Ascending aorta (tissue), 2 donors: ENCODE measurements at regions of chr18 and their contacts with region 1.

Region 1: DNA sequence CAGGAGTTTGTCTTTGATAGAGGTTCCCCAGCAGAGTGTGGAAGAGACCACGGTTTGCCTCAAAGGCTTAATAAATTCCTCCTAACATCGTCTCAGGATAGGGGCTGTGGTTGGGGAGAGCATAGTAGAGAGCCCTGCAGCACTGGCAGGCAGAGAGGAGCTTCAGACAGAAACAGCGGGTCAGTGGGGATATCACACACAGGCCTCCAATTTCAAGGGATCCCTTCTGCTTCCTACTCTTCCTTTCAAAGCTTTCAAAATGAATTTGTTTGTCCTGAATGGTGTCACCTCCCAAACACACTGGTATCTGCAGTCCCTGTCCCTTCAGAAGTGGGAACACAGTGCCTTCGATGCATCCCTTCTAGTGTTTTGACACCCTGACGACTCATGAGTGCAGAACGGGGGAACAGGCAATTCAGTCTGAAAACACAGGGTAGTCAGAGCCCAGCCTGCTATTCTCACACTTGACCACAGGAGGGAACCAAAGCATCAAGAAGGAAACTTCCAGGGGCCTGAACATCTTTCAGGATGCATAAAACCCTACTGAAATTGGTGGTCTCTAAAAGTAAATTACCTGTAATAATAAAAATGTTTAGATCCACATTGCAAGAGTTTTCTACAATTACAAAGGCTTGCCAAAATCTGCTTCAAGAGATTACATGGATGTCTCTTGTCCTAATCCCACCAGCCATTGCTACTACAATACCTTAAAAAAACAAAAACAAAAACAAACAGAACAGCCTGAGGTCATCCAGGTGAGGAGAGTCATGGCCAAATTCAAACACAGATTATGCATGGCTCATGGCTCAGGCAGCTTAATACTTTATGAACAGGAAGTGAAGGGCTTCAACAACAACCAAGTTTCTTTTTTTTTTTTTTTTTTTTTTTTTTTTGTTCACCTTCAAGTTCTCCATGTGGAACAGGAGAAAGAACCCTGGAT is 49.8 kb downstream of the SLC14A2 start:
- DNase-seq: peak in 1 of 2 donors; percentile 88
- H3K4me3 ChIP-seq: no peak overlapping the region
- H3K27ac ChIP-seq: no peak overlapping the region
- H3K4me1 ChIP-seq: peaks cover 8 to 25% of the 10 kb centered on the region in 2 donors
- H3K27me3 ChIP-seq: no peaks in the 10 kb centered on the region
- CTCF ChIP-seq: peak; percentile 90 to 99 (median 93)

Region 2: GRCh38 chr18:45503990-45504389 is 161.1 kb before region 1 on chr18:
- intact Hi-C with region 1: no loop called
- DNase-seq: no peak
- H3K4me3 ChIP-seq: no peak overlapping the region
- H3K27ac ChIP-seq: peak overlapping the region in 1 of 2 donors; percentile 12
- H3K4me1 ChIP-seq: peaks cover 0 to 12% of the 10 kb centered on the region in 2 donors
- H3K27me3 ChIP-seq: no peaks in the 10 kb centered on the region
- CTCF ChIP-seq: no peak

Region 3: DNA sequence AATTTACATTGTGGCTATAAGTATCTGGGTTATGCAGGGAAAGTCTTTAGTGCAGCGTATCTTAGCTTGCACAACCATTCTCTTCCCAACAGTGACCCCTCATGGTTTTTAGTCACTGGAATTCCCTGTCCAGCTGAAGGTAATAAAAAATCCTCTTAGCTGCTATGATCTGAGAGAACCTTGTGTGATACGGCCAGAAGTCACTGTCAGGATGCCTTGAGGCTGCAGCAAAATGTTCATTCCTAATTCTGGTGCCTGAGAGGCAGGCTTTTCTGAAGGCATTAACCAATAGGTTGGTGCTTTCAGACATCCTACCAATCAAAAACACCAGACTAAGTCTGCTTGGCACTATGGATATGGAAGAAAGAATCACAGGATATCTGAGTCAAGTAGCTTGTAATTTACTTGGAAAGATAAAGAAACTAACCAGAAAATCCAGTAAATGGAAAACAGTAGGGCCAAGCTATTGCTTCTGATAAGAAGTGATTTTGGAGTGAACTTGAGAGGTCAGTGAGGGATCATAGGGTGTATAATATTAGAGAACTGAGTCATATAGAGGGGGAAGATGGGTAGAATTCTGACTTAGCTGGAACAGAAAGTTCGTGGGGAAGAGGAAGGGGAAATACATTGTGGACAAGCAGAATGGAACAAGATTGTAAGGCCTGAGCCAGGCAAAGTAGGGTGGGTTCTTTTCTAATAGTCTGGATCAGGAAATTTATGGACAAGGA is 138.8 kb before region 1 on chr18:
- intact Hi-C with region 1: loop called (anchors 5 kb)
- DNase-seq: no peak
- H3K4me3 ChIP-seq: no peak overlapping the region
- H3K27ac ChIP-seq: peak overlapping the region; percentile 16 to 53
- H3K4me1 ChIP-seq: peaks cover 10 to 28% of the 10 kb centered on the region in 2 donors
- H3K27me3 ChIP-seq: no peaks in the 10 kb centered on the region
- CTCF ChIP-seq: peak in 1 of 3 experiments; percentile 36

Region 4: GRCh38 chr18:45755934-45756333 is 90.8 kb after region 1 on chr18:
- intact Hi-C with region 1: loop called (anchors 5 kb)
- DNase-seq: peak; percentile 44 to 94
- H3K4me3 ChIP-seq: no peak overlapping the region
- H3K27ac ChIP-seq: peak overlapping the region; percentile 71 to 73
- H3K4me1 ChIP-seq: peaks cover 13 to 27% of the 10 kb centered on the region in 2 donors
- H3K27me3 ChIP-seq: no peaks in the 10 kb centered on the region
- CTCF ChIP-seq: no peak

Region 5: GRCh38 chr18:45850021-45850420 is 184.9 kb after region 1 on chr18:
- intact Hi-C with region 1: loop called (anchors 5 kb)
- DNase-seq: no peak
- H3K4me3 ChIP-seq: no peak overlapping the region
- H3K27ac ChIP-seq: no peak overlapping the region
- H3K4me1 ChIP-seq: no peaks in the 10 kb centered on the region
- H3K27me3 ChIP-seq: no peaks in the 10 kb centered on the region
- CTCF ChIP-seq: peak in 2 of 3 experiments; percentile 14 to 18

Region 6: GRCh38 chr18:45974088-45974536 is 309.0 kb after region 1 on chr18:
- intact Hi-C with region 1: loop called (anchors 1 kb)
- DNase-seq: peak in 1 of 2 donors; percentile 77
- H3K4me3 ChIP-seq: peak overlapping the region in 1 of 2 donors; percentile 15
- H3K27ac ChIP-seq: no peak overlapping the region
- H3K4me1 ChIP-seq: no peaks in the 10 kb centered on the region
- H3K27me3 ChIP-seq: no peaks in the 10 kb centered on the region
- CTCF ChIP-seq: peak; percentile 69 to 77 (median 72)